ENCODE measurements at regions of chr14 and their contacts with region 1.

Region 1: DNA sequence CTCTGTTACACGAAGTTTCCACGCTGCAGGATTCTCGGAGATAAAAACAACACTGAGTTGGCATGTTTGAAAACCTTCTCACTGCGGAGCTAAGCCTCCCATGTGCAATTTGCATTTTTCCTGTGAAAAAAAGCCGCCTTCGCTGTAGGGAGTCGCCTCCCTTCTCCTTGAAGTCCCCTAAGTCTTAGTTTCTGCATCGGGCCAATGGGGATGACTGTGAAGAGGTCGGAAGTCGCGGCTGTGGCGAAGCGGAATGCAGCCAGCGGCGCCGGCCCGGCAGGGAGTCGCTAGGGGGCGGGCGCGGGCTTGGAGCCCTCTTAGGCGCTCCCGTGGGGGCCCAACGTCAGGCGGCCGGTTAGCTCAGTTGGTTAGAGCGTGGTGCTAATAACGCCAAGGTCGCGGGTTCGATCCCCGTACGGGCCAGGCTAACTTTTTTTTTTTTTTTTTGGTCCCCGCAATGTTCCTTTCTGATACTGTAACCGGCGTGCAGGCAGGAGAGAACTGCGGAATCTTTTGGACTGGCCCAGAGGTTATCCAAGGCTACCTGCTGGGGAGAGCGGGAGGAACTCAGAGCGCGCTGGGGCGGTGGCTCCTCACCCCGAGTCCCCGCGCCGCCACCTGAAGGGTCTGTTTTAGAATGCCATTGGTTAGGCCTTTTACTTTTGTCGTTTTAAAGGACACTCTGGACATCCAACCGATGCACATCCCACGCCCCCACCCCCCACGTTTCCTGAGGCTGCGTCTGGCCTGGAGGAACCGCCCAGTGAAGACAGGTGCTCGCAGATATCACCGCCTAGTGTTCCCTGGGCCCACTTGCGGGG is 2.6 kb upstream of the ZNF839 start:
- DNase-seq: peak; percentile 91
- ATAC-seq: peak; percentile 77 to 85

Region 2: GRCh38 chr14:102063091-102063802 is 253.7 kb before region 1 on chr14:
- intact Hi-C with region 1: loop called in 1 of 2 experiments (anchors 10 kb)
- DNase-seq: peak; percentile 90
- ATAC-seq: peak; percentile 96

Region 3: DNA sequence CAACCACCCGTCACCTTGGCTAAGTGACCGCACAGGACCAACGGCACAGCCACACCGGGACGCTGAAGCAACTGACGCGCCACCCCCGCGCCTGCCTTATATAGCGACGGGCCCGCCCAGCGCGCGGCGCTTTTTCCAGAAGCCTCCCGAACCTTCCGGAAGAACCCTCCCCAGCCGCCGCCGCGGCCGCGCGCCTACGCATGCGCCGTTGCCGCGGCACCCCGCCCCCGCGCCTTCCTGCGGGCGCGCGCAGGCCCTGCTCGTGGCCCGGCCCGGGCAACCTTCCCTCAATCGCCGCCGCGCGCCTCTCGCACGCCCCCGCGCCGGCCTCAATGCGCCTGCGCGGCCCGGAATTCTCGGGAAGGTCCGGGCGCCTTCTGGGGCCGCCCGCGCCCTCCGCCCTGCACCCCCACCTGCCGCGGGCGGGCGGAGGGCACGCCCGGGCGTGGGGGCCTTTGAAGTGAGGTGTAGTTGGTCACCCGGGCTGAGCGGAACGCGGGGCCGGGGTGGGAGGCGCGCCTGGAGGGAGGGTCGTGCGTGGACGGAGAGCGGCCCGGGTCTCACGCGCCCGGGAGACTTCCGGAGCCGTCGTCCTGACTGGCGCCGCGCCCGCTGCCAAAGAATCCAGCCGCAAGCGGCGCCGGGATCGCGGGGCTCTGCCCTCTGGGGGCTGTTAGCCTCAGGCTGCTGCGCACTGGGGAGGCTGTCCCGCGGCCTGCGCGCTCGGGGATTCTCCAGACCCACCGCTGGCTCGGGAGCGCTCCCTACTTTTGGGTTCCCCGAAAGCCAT is 229.8 kb before region 1 on chr14 and contains the start of gene HSP90AA1:
- intact Hi-C with region 1: loop called in 1 of 2 experiments (anchors 5 kb)
- DNase-seq: peak; percentile 96
- ATAC-seq: peak; percentile 91 to 94
- total RNA-seq, gene HSP90AA1: 395 to 505 TPM

Region 4: DNA sequence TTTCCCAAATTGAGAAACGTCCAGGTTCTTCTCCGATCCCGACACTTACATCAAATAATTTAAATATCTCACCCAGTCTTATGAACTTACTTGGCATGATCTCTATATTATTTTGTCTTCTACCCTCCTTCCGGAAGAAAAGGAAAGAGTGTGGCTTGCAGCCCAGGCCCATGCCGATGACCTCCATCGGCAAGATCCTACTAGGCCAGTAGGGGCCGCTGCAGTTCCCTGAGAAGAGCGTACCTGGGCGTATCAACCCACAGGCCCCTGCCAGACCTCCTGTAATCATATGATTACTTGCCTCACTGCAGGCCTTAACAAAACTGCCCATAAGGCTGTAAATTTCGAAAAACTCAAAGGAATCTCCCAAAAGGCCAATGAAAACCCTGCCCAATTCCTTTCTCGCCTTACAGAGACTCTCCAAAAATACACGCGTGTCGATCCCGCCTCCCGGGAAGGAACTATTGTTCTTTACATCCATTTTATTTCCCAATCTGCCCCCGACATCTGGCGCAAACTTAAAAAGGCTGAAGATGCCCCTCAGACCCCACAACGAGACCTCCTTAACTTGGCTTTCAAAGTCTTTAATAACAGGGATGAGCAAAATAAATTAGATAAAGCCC is 81.6 kb before region 1 on chr14:
- intact Hi-C with region 1: loop called (anchors 1 to 5 kb)
- DNase-seq: peak; percentile 90
- ATAC-seq: peak; percentile 97

Region 5: DNA sequence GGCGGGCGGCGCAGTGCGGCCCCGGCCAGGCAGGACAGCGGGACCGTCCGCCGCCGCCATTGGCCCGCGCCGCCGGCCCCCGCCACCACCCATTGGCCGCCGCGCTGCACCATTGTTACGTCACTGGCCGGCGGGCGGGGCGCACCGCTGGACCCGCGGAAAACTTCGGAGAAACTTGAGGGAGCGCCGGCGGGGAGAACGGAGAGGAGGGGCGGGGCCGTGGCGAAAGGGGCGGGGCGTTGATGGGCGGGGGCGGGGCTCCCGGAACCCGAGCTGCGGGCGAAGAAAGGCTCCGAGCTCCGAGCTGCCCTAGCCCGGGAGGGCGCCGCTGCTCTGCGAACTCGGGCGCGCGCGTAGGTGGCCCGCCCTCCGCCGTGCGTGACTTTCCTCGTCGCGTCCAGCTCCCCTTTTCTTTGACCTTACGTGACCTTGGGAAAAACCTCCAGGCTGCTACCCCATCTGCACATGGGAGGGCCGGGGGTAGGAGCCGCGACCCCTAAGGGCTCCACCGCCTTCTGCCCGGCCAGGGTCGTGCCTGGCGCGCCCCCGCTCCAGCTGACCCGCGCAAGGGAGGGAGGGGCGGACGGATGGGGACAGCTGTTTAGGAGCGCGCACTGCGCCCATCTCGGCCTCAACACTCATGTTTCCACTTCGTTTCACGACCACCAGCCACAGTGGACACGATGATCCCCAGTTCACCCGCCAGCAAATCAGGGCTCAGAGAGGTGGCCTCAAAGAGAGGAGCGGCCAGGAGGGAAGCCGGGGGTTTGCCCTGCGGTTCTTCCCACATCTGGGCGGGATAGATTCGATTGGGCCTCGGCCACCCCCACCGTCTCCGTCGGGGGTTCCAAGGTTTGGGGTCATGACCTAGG is 193.0 kb after region 1 on chr14 and contains the start of gene ANKRD9:
- intact Hi-C with region 1: loop called in 1 of 2 experiments (anchors 10 kb)
- DNase-seq: peak; percentile 96
- ATAC-seq: peak; percentile 83 to 86
- total RNA-seq, gene ANKRD9: 97.0 to 160 TPM